Naive thymus-derived CD4-positive, alpha-beta T cell (primary cell): ENCODE measurements at regions of chr17 and their contacts with region 1.

Region 1: GRCh38 chr17:17681187-17681848 is at the start of gene RAI1:
- DNase-seq: peak; percentile 64 to 87 (median 79)
- ATAC-seq: peak; percentile 82
- H3K4me3 ChIP-seq: peak within 1 kb of the TSS; percentile 62
- H3K4me3 Mint-ChIP-seq: peak within 1 kb of the TSS; percentile 84 to 92 (median 89)
- H3K27ac ChIP-seq: peak within 1 kb of the TSS; percentile 93
- H3K27ac Mint-ChIP-seq: peak within 1 kb of the TSS in 7 of 9 donors; percentile 59 to 90 (median 77)
- H3K4me1 ChIP-seq: peaks cover 7 to 17% of the 10 kb centered on the region in 2 donors
- H3K4me1 Mint-ChIP-seq: peaks cover 14 to 42% (median 37%) of the 10 kb centered on the region in 7 donors
- H3K27me3 ChIP-seq: no peaks in the 10 kb centered on the region
- H3K27me3 Mint-ChIP-seq: peaks cover 0 to 16% (median 0%) of the 10 kb centered on the region in 5 donors
- total RNA-seq, gene RAI1: 20.1 to 46.2 (median 23.6) TPM

Region 2: GRCh38 chr17:17663160-17664063 is 17.9 kb before region 1 on chr17:
- CTCF ChIA-PET with region 1: no interaction called
- POLR2A ChIA-PET with region 1: no interaction called
- intact Hi-C with region 1: no loop called
- DNase-seq: peak; percentile 30 to 71 (median 36)
- ATAC-seq: peak; percentile 94
- H3K4me3 ChIP-seq: peak overlapping the region; percentile 13
- H3K4me3 Mint-ChIP-seq: peak overlapping the region in 7 of 10 donors; percentile 1 to 39 (median 20)
- H3K27ac ChIP-seq: no peak overlapping the region
- H3K27ac Mint-ChIP-seq: peak overlapping the region; percentile 15 to 86 (median 62)
- H3K4me1 ChIP-seq: peaks cover 9 to 13% of the 10 kb centered on the region in 2 donors
- H3K4me1 Mint-ChIP-seq: peaks cover 8 to 15% (median 11%) of the 10 kb centered on the region in 7 donors
- H3K27me3 ChIP-seq: no peaks in the 10 kb centered on the region
- H3K27me3 Mint-ChIP-seq: peaks cover 0 to 11% (median 0%) of the 10 kb centered on the region in 5 donors

Region 3: GRCh38 chr17:17723354-17724261 is 42.3 kb after region 1 on chr17:
- CTCF ChIA-PET with region 1: interaction called, 5 read pairs
- POLR2A ChIA-PET with region 1: interaction called, 3 read pairs
- intact Hi-C with region 1: loop called (anchors 1 to 5 kb)
- DNase-seq: peak in 5 of 9 donors; percentile 31 to 61 (median 35)
- ATAC-seq: peak; percentile 55
- H3K4me3 ChIP-seq: peak overlapping the region; percentile 58
- H3K4me3 Mint-ChIP-seq: peak overlapping the region; percentile 77 to 98 (median 91)
- H3K27ac ChIP-seq: no peak overlapping the region
- H3K27ac Mint-ChIP-seq: peak overlapping the region in 6 of 9 donors; percentile 6 to 88 (median 68)
- H3K4me1 ChIP-seq: peaks cover 0 to 23% of the 10 kb centered on the region in 2 donors
- H3K4me1 Mint-ChIP-seq: peaks cover 33 to 57% (median 49%) of the 10 kb centered on the region in 7 donors
- H3K27me3 ChIP-seq: peaks cover 0 to 5% of the 10 kb centered on the region in 2 donors
- H3K27me3 Mint-ChIP-seq: peaks cover 0 to 49% (median 26%) of the 10 kb centered on the region in 5 donors

Region 4: GRCh38 chr17:17774009-17774881 is 92.9 kb after region 1 on chr17:
- CTCF ChIA-PET with region 1: interaction called, 3 read pairs
- POLR2A ChIA-PET with region 1: no interaction called
- intact Hi-C with region 1: loop called in 1 of 2 experiments (anchors 2 kb)
- DNase-seq: no peak
- ATAC-seq: no peak
- H3K4me3 ChIP-seq: no peak overlapping the region
- H3K4me3 Mint-ChIP-seq: no peak overlapping the region
- H3K27ac ChIP-seq: no peak overlapping the region
- H3K27ac Mint-ChIP-seq: peak overlapping the region in 4 of 9 donors; percentile 43 to 68 (median 61)
- H3K4me1 ChIP-seq: no peaks in the 10 kb centered on the region
- H3K4me1 Mint-ChIP-seq: peaks cover 0 to 12% (median 10%) of the 10 kb centered on the region in 7 donors
- H3K27me3 ChIP-seq: no peaks in the 10 kb centered on the region
- H3K27me3 Mint-ChIP-seq: no peaks in the 10 kb centered on the region

Region 5: DNA sequence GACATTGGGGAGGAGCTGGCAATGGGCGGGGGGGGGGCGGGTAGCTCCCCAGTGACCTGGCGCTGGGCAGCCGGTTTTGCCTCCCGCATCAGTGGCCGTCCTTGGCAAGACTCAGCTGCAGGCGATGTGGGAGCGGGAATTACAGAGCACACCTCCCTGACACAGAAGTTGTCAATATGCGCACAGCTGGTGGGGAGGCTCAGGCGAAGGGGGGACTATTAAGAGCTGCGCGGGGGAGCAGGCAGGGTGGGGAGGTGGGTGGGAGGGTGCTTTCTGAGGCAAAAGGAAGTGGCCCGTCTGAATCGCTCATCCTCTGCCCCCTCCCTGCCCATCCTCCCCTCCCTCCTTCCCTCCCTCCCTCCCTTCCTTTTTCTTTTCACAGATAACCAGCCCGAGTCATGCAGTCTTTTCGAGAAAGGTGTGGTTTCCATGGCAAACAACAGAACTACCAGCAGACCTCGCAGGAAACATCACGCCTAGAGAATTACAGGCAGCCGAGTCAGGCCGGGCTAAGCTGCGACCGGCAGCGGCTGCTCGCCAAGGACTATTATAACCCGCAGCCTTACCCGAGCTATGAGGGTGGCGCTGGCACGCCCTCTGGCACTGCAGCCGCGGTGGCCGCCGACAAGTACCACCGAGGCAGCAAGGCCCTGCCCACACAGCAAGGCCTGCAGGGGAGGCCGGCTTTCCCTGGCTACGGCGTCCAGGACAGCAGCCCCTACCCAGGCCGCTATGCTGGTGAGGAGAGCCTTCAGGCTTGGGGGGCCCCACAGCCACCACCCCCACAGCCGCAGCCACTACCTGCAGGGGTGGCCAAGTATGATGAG is 111.4 kb after region 1 on chr17:
- CTCF ChIA-PET with region 1: no interaction called
- POLR2A ChIA-PET with region 1: interaction called, 3 read pairs
- intact Hi-C with region 1: loop called in 1 of 2 experiments (anchors 1 kb)
- DNase-seq: peak in 8 of 9 donors; percentile 42 to 81 (median 72)
- ATAC-seq: peak; percentile 86
- H3K4me3 ChIP-seq: peak overlapping the region; percentile 35
- H3K4me3 Mint-ChIP-seq: peak overlapping the region; percentile 58 to 79 (median 70)
- H3K27ac ChIP-seq: peak overlapping the region; percentile 67
- H3K27ac Mint-ChIP-seq: peak overlapping the region; percentile 85 to 95 (median 88)
- H3K4me1 ChIP-seq: peaks cover 8 to 19% of the 10 kb centered on the region in 2 donors
- H3K4me1 Mint-ChIP-seq: peaks cover 20 to 38% (median 29%) of the 10 kb centered on the region in 7 donors
- H3K27me3 ChIP-seq: no peaks in the 10 kb centered on the region
- H3K27me3 Mint-ChIP-seq: no peaks in the 10 kb centered on the region

Region 6: GRCh38 chr17:17836250-17836817 is 155.0 kb after region 1 on chr17:
- CTCF ChIA-PET with region 1: interaction called, 4 read pairs
- POLR2A ChIA-PET with region 1: interaction called, 6 read pairs
- intact Hi-C with region 1: loop called in 1 of 2 experiments (anchors 1 kb)
- DNase-seq: peak; percentile 93 to 99 (median 97)
- ATAC-seq: peak; percentile 85
- H3K4me3 ChIP-seq: peak overlapping the region; percentile 86
- H3K4me3 Mint-ChIP-seq: peak overlapping the region; percentile 85 to 95 (median 90)
- H3K27ac ChIP-seq: peak overlapping the region; percentile 99
- H3K27ac Mint-ChIP-seq: peak overlapping the region; percentile 94 to 99 (median 98)
- H3K4me1 ChIP-seq: peaks cover 18 to 60% of the 10 kb centered on the region in 2 donors
- H3K4me1 Mint-ChIP-seq: peaks cover 46 to 79% (median 75%) of the 10 kb centered on the region in 7 donors
- H3K27me3 ChIP-seq: no peaks in the 10 kb centered on the region
- H3K27me3 Mint-ChIP-seq: no peaks in the 10 kb centered on the region

Region 7: GRCh38 chr17:17919169-17920107 is 238.1 kb after region 1 on chr17:
- CTCF ChIA-PET with region 1: interaction called, 14 read pairs
- POLR2A ChIA-PET with region 1: interaction called, 5 read pairs
- intact Hi-C with region 1: loop called (anchors 1 kb)
- DNase-seq: peak; percentile 18 to 77 (median 67)
- ATAC-seq: peak; percentile 90
- H3K4me3 ChIP-seq: no peak overlapping the region
- H3K4me3 Mint-ChIP-seq: no peak overlapping the region
- H3K27ac ChIP-seq: no peak overlapping the region
- H3K27ac Mint-ChIP-seq: peak overlapping the region in 5 of 9 donors; percentile 17 to 49 (median 34)
- H3K4me1 ChIP-seq: peaks cover 0 to 6% of the 10 kb centered on the region in 2 donors
- H3K4me1 Mint-ChIP-seq: peaks cover 21 to 34% (median 26%) of the 10 kb centered on the region in 7 donors
- H3K27me3 ChIP-seq: no peaks in the 10 kb centered on the region
- H3K27me3 Mint-ChIP-seq: no peaks in the 10 kb centered on the region

Region 8: DNA sequence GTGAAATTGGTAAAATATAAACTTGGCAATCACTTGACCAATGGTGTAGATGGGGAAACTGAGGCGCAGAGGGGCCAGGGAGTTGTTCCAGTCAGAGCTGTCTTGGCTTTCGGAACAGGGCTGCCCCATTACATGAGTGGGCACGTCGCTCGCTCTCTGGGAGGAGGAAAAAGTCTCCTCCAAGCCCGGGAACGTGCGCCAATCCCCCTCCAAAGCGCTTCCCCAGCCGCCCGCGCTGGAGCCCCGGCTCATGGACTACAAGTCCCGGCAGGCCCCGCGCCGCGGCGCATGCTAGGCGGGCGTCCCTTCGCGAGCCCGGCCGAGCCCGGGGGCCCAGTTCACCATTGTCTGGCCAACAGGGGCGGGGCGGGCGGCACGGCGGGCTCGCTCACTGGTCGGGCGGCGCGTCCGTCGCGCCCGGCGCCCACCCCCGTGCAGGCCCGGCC is 543.8 kb after region 1 on chr17:
- CTCF ChIA-PET with region 1: no interaction called
- POLR2A ChIA-PET with region 1: no interaction called
- intact Hi-C with region 1: loop called in 1 of 2 experiments (anchors 2 kb)
- DNase-seq: peak; percentile 92 to 98 (median 94)
- ATAC-seq: peak; percentile 99
- H3K4me3 ChIP-seq: peak overlapping the region; percentile 46
- H3K4me3 Mint-ChIP-seq: peak overlapping the region; percentile 54 to 94 (median 68)
- H3K27ac ChIP-seq: peak overlapping the region; percentile 34
- H3K27ac Mint-ChIP-seq: peak overlapping the region in 4 of 9 donors; percentile 64 to 80 (median 77)
- H3K4me1 ChIP-seq: peaks cover 7 to 13% of the 10 kb centered on the region in 2 donors
- H3K4me1 Mint-ChIP-seq: peaks cover 24 to 30% (median 27%) of the 10 kb centered on the region in 7 donors
- H3K27me3 ChIP-seq: no peaks in the 10 kb centered on the region
- H3K27me3 Mint-ChIP-seq: no peaks in the 10 kb centered on the region